Aorta (tissue), 5 donors: ENCODE measurements at regions of chr3 and their contacts with region 1.

Region 1: GRCh38 chr3:150870396-150870795 is 34.8 kb downstream of the MINDY4B start:
- DNase-seq: no peak
- ATAC-seq: no peak
- H3K4me3 ChIP-seq: no peak overlapping the region
- H3K27ac ChIP-seq: no peak overlapping the region
- H3K4me1 ChIP-seq: peaks cover 0 to 4% of the 10 kb centered on the region in 2 donors
- H3K27me3 ChIP-seq: no peaks in the 10 kb centered on the region

Region 2: GRCh38 chr3:150721285-150722130 is 148.9 kb before region 1 on chr3:
- intact Hi-C with region 1: loop called (anchors 2 kb)
- DNase-seq: no peak
- ATAC-seq: peak; percentile 78
- H3K4me3 ChIP-seq: no peak overlapping the region
- H3K27ac ChIP-seq: no peak overlapping the region
- H3K4me1 ChIP-seq: no peaks in the 10 kb centered on the region
- H3K27me3 ChIP-seq: no peaks in the 10 kb centered on the region

Region 3: GRCh38 chr3:150787741-150788370 is 82.5 kb before region 1 on chr3:
- intact Hi-C with region 1: loop called in 1 of 2 experiments (anchors 5 kb)
- DNase-seq: peak; percentile 92 to 97
- ATAC-seq: peak; percentile 86
- H3K4me3 ChIP-seq: no peak overlapping the region
- H3K27ac ChIP-seq: no peak overlapping the region
- H3K4me1 ChIP-seq: no peaks in the 10 kb centered on the region
- H3K27me3 ChIP-seq: no peaks in the 10 kb centered on the region

Region 4: DNA sequence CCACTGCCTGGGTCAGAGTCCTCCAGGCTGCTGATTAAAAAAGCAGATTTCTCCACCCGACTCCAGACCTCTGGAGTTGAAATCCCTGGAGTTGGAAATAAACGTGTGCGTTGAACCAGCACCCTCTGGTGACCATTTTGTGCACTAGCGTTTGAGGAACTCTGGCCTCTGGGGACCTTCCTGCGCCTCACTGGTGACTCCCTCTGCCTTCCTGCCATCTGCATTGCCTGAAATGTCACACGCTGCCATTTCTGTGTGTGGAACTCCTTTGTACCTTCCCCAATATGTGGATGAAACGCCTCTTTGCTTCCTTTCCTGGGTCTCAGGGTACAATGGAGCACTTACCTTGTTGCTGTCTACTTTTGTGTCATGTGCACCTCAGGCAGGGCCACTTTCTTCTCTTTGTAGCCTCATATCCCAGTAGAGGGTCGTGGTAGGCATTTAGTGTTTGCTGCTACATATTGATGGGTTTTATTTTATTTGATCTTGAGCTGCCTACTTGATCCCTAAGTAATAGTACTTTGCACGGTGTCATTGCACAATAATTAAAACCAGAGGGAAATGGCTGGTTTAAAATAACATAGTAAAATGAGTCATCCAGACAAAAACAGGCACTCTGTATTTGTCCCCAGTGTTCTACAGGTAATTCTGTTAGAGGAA is 275.8 kb after region 1 on chr3:
- intact Hi-C with region 1: loop called in 1 of 2 experiments (anchors 10 kb)
- DNase-seq: peak; percentile 76 to 81
- ATAC-seq: peak; percentile 92
- H3K4me3 ChIP-seq: no peak overlapping the region
- H3K27ac ChIP-seq: no peak overlapping the region
- H3K4me1 ChIP-seq: no peaks in the 10 kb centered on the region
- H3K27me3 ChIP-seq: no peaks in the 10 kb centered on the region